CD14-positive monocyte (primary cell): ENCODE measurements at regions of chr19 and their contacts with region 1.

Region 1: DNA sequence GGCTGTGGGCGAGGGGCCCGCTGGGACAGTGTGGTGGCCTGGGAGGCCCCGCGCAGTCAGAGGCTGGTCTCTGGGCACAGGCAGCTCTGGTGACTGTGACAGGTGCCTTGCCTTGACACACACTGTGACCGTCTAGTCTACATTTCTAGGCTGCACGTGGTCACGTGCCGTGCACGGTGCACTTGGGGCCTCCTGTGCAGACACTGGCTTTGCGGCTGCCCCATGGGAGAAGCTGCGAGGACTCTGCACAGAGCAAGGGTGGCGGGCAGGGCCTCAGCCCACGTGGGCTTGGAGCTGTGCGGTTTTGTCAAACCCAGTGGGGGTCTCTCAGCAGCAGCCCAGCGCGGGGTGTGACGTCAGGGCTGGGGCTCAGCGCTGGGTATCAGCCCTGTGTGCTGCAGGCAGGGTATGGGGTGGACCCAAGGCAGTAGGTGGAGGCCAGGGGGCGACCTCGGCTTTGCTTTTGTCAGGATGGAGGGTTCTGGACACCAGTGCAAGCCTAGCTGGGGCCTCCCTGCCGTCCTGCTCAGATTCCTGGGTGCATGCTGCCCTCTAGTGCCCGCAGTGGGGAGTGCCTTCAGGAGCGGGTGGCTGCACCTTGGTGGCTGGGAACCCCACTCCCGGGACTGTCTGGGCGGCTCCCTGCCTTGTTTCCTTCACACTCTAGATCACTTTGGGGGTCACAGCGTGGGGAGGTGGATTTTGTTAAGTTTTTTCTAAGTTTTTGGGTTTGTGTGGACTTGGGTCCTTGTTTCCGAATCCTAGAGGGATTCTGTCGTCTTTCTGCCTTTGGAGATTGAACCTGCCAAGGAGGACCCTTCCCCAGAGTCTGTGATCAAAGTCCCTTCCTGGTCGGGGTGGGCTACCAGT is 62.6 kb downstream of the KDM4B start:
- DNase-seq: peak; percentile 61 to 73 (median 62)
- H3K4me3 ChIP-seq: no peak overlapping the region
- H3K4me3 Mint-ChIP-seq: no peak overlapping the region
- H3K27ac ChIP-seq: peak overlapping the region in 1 of 2 donors; percentile 20
- H3K27ac Mint-ChIP-seq: no peak overlapping the region
- H3K4me1 ChIP-seq: no peaks in the 10 kb centered on the region
- H3K4me1 Mint-ChIP-seq: peaks cover 14% of the 10 kb centered on the region
- H3K27me3 ChIP-seq: no peaks in the 10 kb centered on the region
- H3K27me3 Mint-ChIP-seq: no peaks in the 10 kb centered on the region
- CTCF ChIP-seq: peak; percentile 91

Region 2: GRCh38 chr19:4732680-4733114 is 298.8 kb before region 1 on chr19:
- intact Hi-C with region 1: loop called (anchors 5 kb)
- DNase-seq: peak; percentile 43 to 65 (median 53)
- H3K4me3 ChIP-seq: peak overlapping the region in 1 of 3 experiments; percentile 28
- H3K4me3 Mint-ChIP-seq: peak overlapping the region in 1 of 2 donors; percentile 15
- H3K27ac ChIP-seq: no peak overlapping the region
- H3K27ac Mint-ChIP-seq: no peak overlapping the region
- H3K4me1 ChIP-seq: peaks cover 0 to 3% of the 10 kb centered on the region in 2 donors
- H3K4me1 Mint-ChIP-seq: peaks cover 12% of the 10 kb centered on the region
- H3K27me3 ChIP-seq: peaks cover 0 to 6% of the 10 kb centered on the region in 2 donors
- H3K27me3 Mint-ChIP-seq: peaks cover 7 to 18% (median 14%) of the 10 kb centered on the region in 3 donors
- CTCF ChIP-seq: peak; percentile 75

Region 3: DNA sequence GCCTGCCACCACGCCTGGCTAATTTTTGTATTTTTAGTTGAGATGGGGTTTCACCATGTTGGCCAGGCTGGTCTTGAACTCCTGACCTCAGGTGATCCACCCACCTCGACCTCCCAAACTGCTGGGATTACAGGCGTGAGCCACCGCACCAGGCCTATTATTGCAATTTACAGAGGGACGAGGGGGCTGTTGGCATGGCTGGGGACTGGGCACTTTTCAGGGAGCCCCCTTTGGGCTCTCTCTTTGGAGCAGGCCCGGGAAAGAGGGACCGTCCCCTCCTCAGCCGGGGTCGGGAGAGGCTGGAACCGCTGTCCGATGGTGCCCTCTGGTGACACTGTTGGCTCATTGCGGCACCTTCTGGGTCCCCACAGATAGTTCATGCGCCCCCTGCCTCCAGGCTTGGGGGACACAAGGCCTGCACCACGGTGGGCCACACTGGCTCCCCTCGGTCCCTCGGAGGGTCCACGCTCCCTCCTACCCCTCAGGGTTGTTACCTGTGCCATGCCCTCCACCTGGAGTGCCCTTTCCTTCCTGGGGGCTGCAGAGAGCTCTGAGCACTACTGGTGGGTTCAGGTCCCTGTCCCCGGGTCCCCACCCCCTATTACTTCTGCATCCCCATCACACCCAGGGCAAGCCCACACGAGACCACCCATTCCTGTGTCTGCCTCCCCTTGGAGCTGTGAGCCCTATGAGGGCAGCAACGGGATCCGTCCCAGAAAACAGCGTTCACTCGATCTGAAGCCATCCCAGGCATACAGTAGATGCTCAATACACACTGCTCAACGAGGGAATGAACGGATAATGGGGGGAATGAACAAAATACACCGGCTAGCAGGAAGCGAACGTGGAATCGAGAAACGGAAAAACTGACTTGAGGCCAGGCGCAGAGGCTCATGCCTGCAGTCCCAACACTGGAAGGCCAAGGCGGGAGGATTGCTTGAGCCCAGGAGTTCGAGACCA is 227.4 kb before region 1 on chr19:
- intact Hi-C with region 1: loop called in 1 of 2 experiments (anchors 10 kb)
- DNase-seq: peak; percentile 25 to 66 (median 65)
- H3K4me3 ChIP-seq: no peak overlapping the region
- H3K4me3 Mint-ChIP-seq: no peak overlapping the region
- H3K27ac ChIP-seq: no peak overlapping the region
- H3K27ac Mint-ChIP-seq: peak overlapping the region in 2 of 7 donors; percentile 8 to 60
- H3K4me1 ChIP-seq: peaks cover 31 to 37% of the 10 kb centered on the region in 2 donors
- H3K4me1 Mint-ChIP-seq: peaks cover 29% of the 10 kb centered on the region
- H3K27me3 ChIP-seq: no peaks in the 10 kb centered on the region
- H3K27me3 Mint-ChIP-seq: peaks cover 0 to 2% (median 1%) of the 10 kb centered on the region in 3 donors
- CTCF ChIP-seq: peak; percentile 83

Region 4: DNA sequence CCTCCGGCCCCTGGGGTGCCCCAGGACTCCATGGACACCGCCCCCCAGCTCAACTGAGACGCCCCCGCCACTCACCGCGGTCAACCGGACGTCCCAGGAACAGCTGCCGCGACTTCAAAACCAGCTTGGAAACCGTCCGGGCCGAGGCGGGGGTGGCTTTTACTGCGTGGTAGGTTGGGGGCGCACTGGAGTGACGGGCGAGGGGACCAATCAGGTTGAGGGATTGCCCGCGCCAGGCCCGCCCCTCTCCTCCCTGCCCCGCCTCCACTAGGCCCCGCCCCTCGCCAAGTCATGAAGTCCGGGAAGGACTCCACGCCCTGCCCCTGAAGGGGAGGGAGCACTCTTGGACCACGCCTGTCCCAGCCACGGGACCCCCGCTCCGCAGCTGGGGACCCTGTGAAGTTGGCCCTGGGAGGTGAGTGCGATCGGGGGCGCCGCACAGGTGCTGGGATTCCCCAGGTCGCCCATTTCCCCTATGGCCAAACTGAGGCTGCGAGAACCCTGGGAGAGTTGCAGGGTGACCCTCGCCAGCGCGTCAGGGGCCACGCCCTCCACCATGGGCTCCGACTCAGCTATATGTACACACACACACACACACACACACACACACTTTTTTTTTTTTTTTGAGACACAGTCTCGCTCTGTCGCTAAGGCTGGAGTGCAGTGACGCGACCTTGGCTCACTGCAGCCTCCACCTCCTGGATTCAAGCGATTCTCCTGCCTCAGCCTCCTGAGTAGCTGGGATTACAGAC is 163.8 kb before region 1 on chr19 and contains the start of gene PLIN3:
- intact Hi-C with region 1: loop called (anchors 2 to 5 kb)
- DNase-seq: peak; percentile 89 to 96 (median 95)
- H3K4me3 ChIP-seq: peak within 1 kb of the TSS; percentile 67 to 100 (median 92)
- H3K4me3 Mint-ChIP-seq: peak within 1 kb of the TSS; percentile 92 to 94
- H3K27ac ChIP-seq: peak within 1 kb of the TSS; percentile 71 to 90
- H3K27ac Mint-ChIP-seq: peak within 1 kb of the TSS; percentile 86 to 96 (median 93)
- H3K4me1 ChIP-seq: peaks cover 48 to 51% of the 10 kb centered on the region in 2 donors
- H3K4me1 Mint-ChIP-seq: peaks cover 51% of the 10 kb centered on the region
- H3K27me3 ChIP-seq: no peaks in the 10 kb centered on the region
- H3K27me3 Mint-ChIP-seq: peaks cover 0 to 4% (median 0%) of the 10 kb centered on the region in 3 donors
- CTCF ChIP-seq: no peak
- polyA plus RNA-seq, gene PLIN3: 78.8 to 151 (median 138) TPM

Region 5: DNA sequence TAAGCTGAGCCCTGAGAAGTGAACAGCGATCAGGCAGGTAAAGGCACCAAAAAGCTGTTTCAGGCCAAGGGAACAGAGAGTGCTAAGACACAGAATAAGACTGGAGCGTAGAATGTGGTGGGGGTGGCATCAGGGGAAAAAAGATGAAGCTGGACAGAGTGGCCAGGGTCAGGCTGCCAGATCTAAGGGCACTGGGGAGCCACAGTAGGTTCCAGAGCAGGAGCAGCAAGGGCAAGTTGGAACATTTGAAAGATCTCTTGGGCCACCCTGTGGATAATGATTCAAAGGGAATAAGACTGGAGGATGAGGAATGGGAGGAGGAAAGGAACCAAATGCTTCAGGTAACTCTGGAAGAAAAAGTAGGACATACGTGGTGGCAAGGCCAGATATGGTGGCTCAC is 157.5 kb before region 1 on chr19:
- intact Hi-C with region 1: loop called (anchors 2 to 5 kb)
- DNase-seq: no peak
- H3K4me3 ChIP-seq: no peak overlapping the region
- H3K4me3 Mint-ChIP-seq: no peak overlapping the region
- H3K27ac ChIP-seq: no peak overlapping the region
- H3K27ac Mint-ChIP-seq: no peak overlapping the region
- H3K4me1 ChIP-seq: peaks cover 37 to 38% of the 10 kb centered on the region in 2 donors
- H3K4me1 Mint-ChIP-seq: peaks cover 39% of the 10 kb centered on the region
- H3K27me3 ChIP-seq: peaks cover 0 to 4% of the 10 kb centered on the region in 2 donors
- H3K27me3 Mint-ChIP-seq: peaks cover 0 to 14% (median 10%) of the 10 kb centered on the region in 3 donors
- CTCF ChIP-seq: no peak